ENCODE measurements at regions of chr4 and their contacts with region 1.

Region 1: GRCh38 chr4:177441803-177442622 is at the start of gene AGA:
- DNase-seq: peak; percentile 93 to 94
- H3K4me3 ChIP-seq: peak within 1 kb of the TSS; percentile 67
- H3K4me3 Mint-ChIP-seq: peak within 1 kb of the TSS; percentile 98
- H3K27ac Mint-ChIP-seq: peak within 1 kb of the TSS; percentile 97
- H3K4me1 ChIP-seq: 0 out of 2 replicates have a peak, but pooled peaks cover 3% of the 10 kb centered on the region
- H3K4me1 Mint-ChIP-seq: peaks cover 7% of the 10 kb centered on the region
- H3K27me3 ChIP-seq: no peaks in the 10 kb centered on the region
- H3K27me3 Mint-ChIP-seq: no peaks in the 10 kb centered on the region
- CTCF ChIP-seq: no peak
- total RNA-seq, gene AGA: 25.2 and 35.4 TPM in 2 replicates

Region 2: GRCh38 chr4:177250056-177250696 is 191.8 kb before region 1 on chr4:
- CTCF ChIA-PET with region 1: no interaction called
- POLR2A ChIA-PET with region 1: no interaction called
- intact Hi-C with region 1: loop called (anchors 5 kb)
- DNase-seq: peak; percentile 54 to 76
- H3K4me3 ChIP-seq: no peak overlapping the region
- H3K4me3 Mint-ChIP-seq: no peak overlapping the region
- H3K27ac Mint-ChIP-seq: no peak overlapping the region
- H3K4me1 ChIP-seq: no peaks in the 10 kb centered on the region
- H3K4me1 Mint-ChIP-seq: no peaks in the 10 kb centered on the region
- H3K27me3 ChIP-seq: no peaks in the 10 kb centered on the region
- H3K27me3 Mint-ChIP-seq: peaks cover 12% of the 10 kb centered on the region
- CTCF ChIP-seq: peak; percentile 82 to 94

Region 3: DNA sequence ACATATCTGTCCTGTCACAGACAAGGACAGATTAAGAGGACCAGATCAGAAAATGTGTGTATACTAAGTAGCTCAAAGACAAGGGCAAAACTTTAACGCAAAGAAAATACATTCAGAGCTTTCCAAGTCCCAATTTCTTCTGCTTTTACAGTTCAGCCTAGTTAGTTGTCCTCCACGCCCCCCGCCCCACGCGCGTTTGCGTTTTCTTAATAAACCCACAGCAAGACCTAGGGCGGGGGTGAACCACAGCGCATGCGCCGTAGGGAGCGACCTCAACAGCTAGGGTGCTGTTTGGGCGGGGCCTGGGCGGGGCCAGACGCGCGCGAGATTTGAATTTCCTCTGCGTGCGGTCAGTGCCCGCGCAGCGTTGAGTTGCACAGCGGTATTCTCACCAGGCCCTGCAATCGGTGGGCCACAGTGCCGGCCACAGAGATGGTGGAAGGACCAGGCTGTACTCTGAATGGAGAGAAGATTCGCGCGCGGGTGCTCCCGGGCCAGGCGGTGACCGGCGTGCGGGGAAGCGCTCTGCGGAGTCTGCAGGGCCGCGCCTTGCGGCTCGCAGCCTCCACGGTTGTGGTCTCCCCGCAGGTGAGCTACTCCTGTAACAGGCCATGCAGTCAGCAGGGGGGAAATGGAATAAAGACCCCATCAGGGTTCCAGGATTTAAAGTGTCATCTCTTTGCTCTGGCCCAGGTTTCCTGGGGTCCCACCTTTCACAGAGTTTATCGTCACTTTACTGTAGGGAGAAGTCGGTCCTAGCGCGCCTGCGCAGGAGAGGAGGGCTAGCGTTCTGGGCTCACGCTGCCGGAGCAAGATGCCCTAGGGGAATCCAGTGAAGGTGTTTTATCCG is 132.3 kb before region 1 on chr4 and contains the start of gene NEIL3:
- CTCF ChIA-PET with region 1: no interaction called
- POLR2A ChIA-PET with region 1: interaction called, 11 read pairs
- intact Hi-C with region 1: loop called (anchors 5 kb)
- DNase-seq: peak; percentile 86 to 91
- H3K4me3 ChIP-seq: peak within 1 kb of the TSS; percentile 82
- H3K4me3 Mint-ChIP-seq: peak within 1 kb of the TSS; percentile 86
- H3K27ac Mint-ChIP-seq: peak within 1 kb of the TSS; percentile 90
- H3K4me1 ChIP-seq: peaks cover 8% of the 10 kb centered on the region; the same call in 1 of the 2 replicates
- H3K4me1 Mint-ChIP-seq: no peaks in the 10 kb centered on the region
- H3K27me3 ChIP-seq: no peaks in the 10 kb centered on the region
- H3K27me3 Mint-ChIP-seq: no peaks in the 10 kb centered on the region
- CTCF ChIP-seq: no peak
- total RNA-seq, gene NEIL3: 8.0 and 8.5 TPM in 2 replicates

Region 4: GRCh38 chr4:177367336-177367735 is 74.7 kb before region 1 on chr4:
- CTCF ChIA-PET with region 1: no interaction called
- POLR2A ChIA-PET with region 1: interaction called, 3 read pairs
- intact Hi-C with region 1: loop called (anchors 2 kb)
- DNase-seq: peak in 1 of 2 experiments; percentile 24
- H3K4me3 ChIP-seq: no peak overlapping the region
- H3K4me3 Mint-ChIP-seq: no peak overlapping the region
- H3K27ac Mint-ChIP-seq: no peak overlapping the region
- H3K4me1 ChIP-seq: no peaks in the 10 kb centered on the region
- H3K4me1 Mint-ChIP-seq: no peaks in the 10 kb centered on the region
- H3K27me3 ChIP-seq: no peaks in the 10 kb centered on the region
- H3K27me3 Mint-ChIP-seq: no peaks in the 10 kb centered on the region
- CTCF ChIP-seq: peak in 1 of 2 experiments; percentile 47

Region 5: DNA sequence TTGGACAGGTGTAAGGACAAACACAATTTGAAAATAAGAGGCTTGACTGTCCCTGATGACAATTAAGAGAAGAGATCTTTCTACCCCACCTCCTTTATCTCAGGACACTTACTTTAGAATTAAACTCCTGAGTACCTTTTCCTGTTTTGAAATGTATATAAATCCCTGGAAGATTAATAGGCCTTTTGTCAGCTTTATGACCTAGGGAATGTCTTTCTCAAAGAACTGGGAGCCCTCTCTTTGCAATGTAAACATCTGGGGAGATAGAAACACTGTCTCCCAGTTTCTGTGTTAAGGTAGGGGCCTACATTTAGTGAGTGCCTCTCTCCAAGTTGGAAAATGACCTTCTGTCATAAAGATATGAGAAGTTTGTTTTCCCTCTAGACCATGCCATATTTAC is 31.4 kb before region 1 on chr4:
- CTCF ChIA-PET with region 1: no interaction called
- POLR2A ChIA-PET with region 1: interaction called, 7 read pairs
- intact Hi-C with region 1: loop called (anchors 1 kb)
- DNase-seq: peak; percentile 44 to 46
- H3K4me3 ChIP-seq: no peak overlapping the region
- H3K4me3 Mint-ChIP-seq: no peak overlapping the region
- H3K27ac Mint-ChIP-seq: no peak overlapping the region
- H3K4me1 ChIP-seq: peaks cover 7% of the 10 kb centered on the region; the same call in 1 of the 2 replicates
- H3K4me1 Mint-ChIP-seq: peaks cover 10% of the 10 kb centered on the region
- H3K27me3 ChIP-seq: no peaks in the 10 kb centered on the region
- H3K27me3 Mint-ChIP-seq: no peaks in the 10 kb centered on the region
- CTCF ChIP-seq: no peak

Region 6: GRCh38 chr4:177455561-177455970 is 13.6 kb after region 1 on chr4:
- CTCF ChIA-PET with region 1: no interaction called
- POLR2A ChIA-PET with region 1: no interaction called
- intact Hi-C with region 1: loop called (anchors 1 kb)
- DNase-seq: peak; percentile 19 to 47
- H3K4me3 ChIP-seq: no peak overlapping the region
- H3K4me3 Mint-ChIP-seq: no peak overlapping the region
- H3K27ac Mint-ChIP-seq: no peak overlapping the region
- H3K4me1 ChIP-seq: peaks cover 9% of the 10 kb centered on the region; the same call in 1 of the 2 replicates
- H3K4me1 Mint-ChIP-seq: no peaks in the 10 kb centered on the region
- H3K27me3 ChIP-seq: no peaks in the 10 kb centered on the region
- H3K27me3 Mint-ChIP-seq: no peaks in the 10 kb centered on the region
- CTCF ChIP-seq: no peak

Region 7: GRCh38 chr4:177789610-177790009 is 347.6 kb after region 1 on chr4:
- CTCF ChIA-PET with region 1: no interaction called
- POLR2A ChIA-PET with region 1: no interaction called
- intact Hi-C with region 1: loop called (anchors 5 kb)
- DNase-seq: no peak
- H3K4me3 ChIP-seq: no peak overlapping the region
- H3K4me3 Mint-ChIP-seq: peak overlapping the region; percentile 6
- H3K27ac Mint-ChIP-seq: peak overlapping the region; percentile 63
- H3K4me1 ChIP-seq: peaks cover 52% of the 10 kb centered on the region
- H3K4me1 Mint-ChIP-seq: peaks cover 36% of the 10 kb centered on the region
- H3K27me3 ChIP-seq: no peaks in the 10 kb centered on the region
- H3K27me3 Mint-ChIP-seq: no peaks in the 10 kb centered on the region
- CTCF ChIP-seq: no peak

Measured in Caco-2 (cell line).